ENCODE measurements at regions of chrX and their contacts with region 1.

Region 1: GRCh38 chrX:24498975-24499374 is 33.9 kb downstream of the PDK3 start:
- DNase-seq: no peak
- H3K4me3 Mint-ChIP-seq: no peak overlapping the region
- H3K27ac Mint-ChIP-seq: no peak overlapping the region
- H3K4me1 Mint-ChIP-seq: peaks cover 14% of the 10 kb centered on the region
- H3K27me3 Mint-ChIP-seq: no peaks in the 10 kb centered on the region

Region 2: DNA sequence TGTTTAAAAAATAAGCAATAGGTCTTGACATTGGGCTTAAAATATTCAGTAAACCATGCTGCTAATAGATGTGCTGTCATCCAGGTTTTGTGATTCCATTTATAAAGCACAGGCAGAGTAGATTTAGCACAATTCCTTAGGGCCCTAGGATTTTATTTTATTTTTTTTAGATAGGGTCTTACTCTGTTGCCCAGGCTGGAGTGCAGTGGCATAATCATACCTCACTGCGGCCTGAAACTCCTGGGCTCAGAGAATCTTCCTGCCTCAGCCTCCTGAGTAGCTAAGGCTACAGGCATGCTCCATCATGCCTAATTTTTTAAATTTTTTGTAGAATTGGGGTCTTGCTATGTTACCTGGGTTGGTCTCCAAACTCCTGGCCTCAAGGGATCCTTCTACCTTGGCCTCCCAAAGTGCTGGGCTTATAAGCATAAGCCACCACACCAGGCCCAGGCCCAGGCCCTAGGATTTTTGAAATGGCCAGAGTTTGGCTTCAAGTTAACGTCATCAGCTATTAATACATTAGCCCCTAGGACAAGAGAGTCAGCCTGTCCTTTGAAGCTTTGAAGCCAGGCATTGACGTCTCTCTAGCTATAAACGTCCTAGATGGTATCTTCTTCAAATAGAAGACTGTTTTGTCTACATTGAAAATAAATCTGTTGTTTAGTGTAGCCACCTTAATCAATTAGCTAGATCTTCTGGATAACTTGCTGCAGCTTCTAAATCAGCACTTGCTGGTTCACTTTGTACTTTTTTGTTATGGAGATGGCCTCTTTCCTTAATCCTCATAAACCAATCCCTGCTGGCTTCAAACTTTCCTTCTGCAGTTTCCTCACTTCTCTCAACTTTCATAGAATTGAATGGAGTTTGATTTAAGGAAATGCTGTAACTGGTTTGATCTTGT is 408.4 kb before region 1 on chrX:
- intact Hi-C with region 1: no loop called
- DNase-seq: no peak
- H3K4me3 Mint-ChIP-seq: no peak overlapping the region
- H3K27ac Mint-ChIP-seq: no peak overlapping the region
- H3K4me1 Mint-ChIP-seq: no peaks in the 10 kb centered on the region
- H3K27me3 Mint-ChIP-seq: no peaks in the 10 kb centered on the region

Region 3: GRCh38 chrX:24395775-24396174 is 103.2 kb before region 1 on chrX:
- intact Hi-C with region 1: loop called (anchors 1 kb)
- DNase-seq: peak; percentile 86
- H3K4me3 Mint-ChIP-seq: no peak overlapping the region
- H3K27ac Mint-ChIP-seq: no peak overlapping the region
- H3K4me1 Mint-ChIP-seq: peaks cover 2% of the 10 kb centered on the region
- H3K27me3 Mint-ChIP-seq: peaks cover 10% of the 10 kb centered on the region

Measured in activated CD4-positive, alpha-beta T cell treated with anti-CD3 and anti-CD28 coated beads, Interleukin-2, amount 10 ng/mL, durations not matched to agents 24 days and 14 days (primary cell).